Heart right ventricle (tissue), 16 donors: ENCODE measurements at regions of chr5 and their contacts with region 1.

Region 1: DNA sequence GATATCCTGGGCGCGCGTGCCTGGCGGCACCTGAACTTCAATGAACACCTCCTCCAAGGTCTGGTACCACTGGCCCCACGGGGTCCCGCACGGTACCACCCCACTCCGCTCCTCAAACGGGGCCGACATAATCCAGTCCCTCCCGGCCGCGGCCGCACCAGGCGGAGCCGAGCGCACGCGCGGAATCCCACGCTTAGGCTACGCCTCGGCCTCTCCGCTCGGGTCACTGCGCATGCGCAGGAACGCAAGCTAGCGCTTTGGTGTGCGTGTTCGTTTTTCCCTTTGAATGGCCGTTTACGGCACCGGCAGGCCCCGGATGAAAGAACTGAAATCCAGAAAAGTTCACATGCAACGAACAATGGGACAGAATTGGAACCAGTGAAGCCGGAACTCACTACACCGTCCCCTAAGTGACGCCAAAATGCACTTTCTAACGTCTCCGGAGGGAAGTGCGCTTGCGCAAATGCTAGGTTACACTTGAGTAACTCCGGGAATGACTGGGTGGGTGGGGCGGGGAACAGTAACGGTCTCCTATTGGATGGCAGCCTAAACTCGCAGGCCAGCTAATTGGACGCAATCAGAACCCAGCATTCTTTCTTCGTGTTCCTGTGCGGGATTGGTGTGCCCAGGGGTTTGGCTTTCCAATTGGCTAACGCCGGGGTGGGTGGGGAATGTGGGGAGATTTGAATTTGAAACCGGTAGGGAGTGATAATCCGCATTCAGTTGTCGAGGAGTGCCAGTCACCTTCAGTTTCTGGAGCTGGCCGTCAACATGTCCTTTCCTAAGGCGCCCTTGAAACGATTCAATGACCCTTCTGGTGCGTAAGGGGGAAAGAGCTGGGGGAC is at the starts of genes HMMR and NUDCD2:
- DNase-seq: peak; percentile 97 to 98
- ATAC-seq: peak; percentile 95 to 98 (median 97)
- H3K4me3 ChIP-seq: peak within 1 kb of the TSS; percentile 64 to 98 (median 81)
- H3K27ac ChIP-seq: peak within 1 kb of the TSS; percentile 89 to 99 (median 94)
- H3K4me1 ChIP-seq: peaks cover 6 to 37% (median 30%) of the 10 kb centered on the region in 9 donors
- H3K27me3 ChIP-seq: no peaks in the 10 kb centered on the region
- CTCF ChIP-seq: peak in 1 of 9 donors; percentile 17
- total RNA-seq, gene HMMR: 0.10 to 4.0 (median 0.47) TPM
- total RNA-seq, gene NUDCD2: 9.3 to 17.1 (median 12.7) TPM

Region 2: GRCh38 chr5:163437309-163438182 is 22.6 kb before region 1 on chr5 and contains the start of gene CCNG1:
- intact Hi-C with region 1: loop called in 2 of 10 experiments (anchors 1 to 2 kb)
- DNase-seq: peak; percentile 90 to 96
- ATAC-seq: peak; percentile 96 to 99 (median 98)
- H3K4me3 ChIP-seq: peak within 1 kb of the TSS; percentile 78 to 99 (median 94)
- H3K27ac ChIP-seq: peak within 1 kb of the TSS; percentile 59 to 97 (median 92)
- H3K4me1 ChIP-seq: peaks cover 15 to 44% (median 32%) of the 10 kb centered on the region in 9 donors
- H3K27me3 ChIP-seq: no peaks in the 10 kb centered on the region
- CTCF ChIP-seq: peak in 1 of 9 donors; percentile 1
- total RNA-seq, gene CCNG1: 47.1 to 137 (median 70.4) TPM

Region 3: GRCh38 chr5:163505368-163506094 is 45.4 kb after region 1 on chr5 and contains the start of gene MAT2B:
- intact Hi-C with region 1: loop called in 8 of 10 experiments (anchors 1 to 10 kb)
- DNase-seq: peak; percentile 96 to 97
- ATAC-seq: peak; percentile 97 to 99 (median 98)
- H3K4me3 ChIP-seq: peak within 1 kb of the TSS; percentile 59 to 90 (median 82)
- H3K27ac ChIP-seq: peak within 1 kb of the TSS; percentile 88 to 99 (median 94)
- H3K4me1 ChIP-seq: peaks cover 6 to 65% (median 42%) of the 10 kb centered on the region in 9 donors
- H3K27me3 ChIP-seq: no peaks in the 10 kb centered on the region
- CTCF ChIP-seq: peak; percentile 12 to 77 (median 48)
- total RNA-seq, gene MAT2B: 48.4 to 63.2 (median 56.9) TPM

Region 4: GRCh38 chr5:163789870-163790269 is 329.7 kb after region 1 on chr5:
- intact Hi-C with region 1: no loop called
- DNase-seq: no peak
- ATAC-seq: no peak
- H3K4me3 ChIP-seq: no peak overlapping the region
- H3K27ac ChIP-seq: no peak overlapping the region
- H3K4me1 ChIP-seq: no peaks in the 10 kb centered on the region
- H3K27me3 ChIP-seq: no peaks in the 10 kb centered on the region
- CTCF ChIP-seq: no peak